ENCODE measurements at regions of chr18 and their contacts with region 1.

Region 1: DNA sequence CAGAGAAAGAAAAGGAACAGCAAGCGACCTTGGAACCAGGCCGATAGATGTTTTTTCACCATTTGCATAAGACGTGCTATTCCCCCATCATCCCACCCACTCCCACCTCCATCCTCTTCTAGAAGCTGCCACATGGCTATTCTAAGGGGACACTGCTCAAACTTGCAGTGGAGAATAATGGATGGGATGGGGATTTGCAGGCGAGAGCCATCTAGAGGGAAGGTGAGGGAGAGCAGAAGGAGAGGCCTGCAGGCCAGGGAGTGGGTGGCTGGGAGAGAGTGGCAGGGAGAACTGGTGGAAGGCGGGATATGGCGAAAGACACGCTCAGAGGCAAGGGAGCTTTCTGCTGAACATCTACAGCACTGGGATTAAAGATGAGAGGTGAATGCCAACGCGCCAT is 84.9 kb downstream of the MAPK4 start:
- DNase-seq: peak in 1 of 2 experiments; percentile 28
- H3K4me3 ChIP-seq: no peak overlapping the region
- H3K4me3 Mint-ChIP-seq: no peak overlapping the region
- H3K27ac Mint-ChIP-seq: no peak overlapping the region
- H3K4me1 ChIP-seq: no peaks in the 10 kb centered on the region
- H3K4me1 Mint-ChIP-seq: no peaks in the 10 kb centered on the region
- H3K27me3 ChIP-seq: no peaks in the 10 kb centered on the region
- H3K27me3 Mint-ChIP-seq: no peaks in the 10 kb centered on the region
- CTCF ChIP-seq: peak in 1 of 2 experiments; percentile 49

Region 2: GRCh38 chr18:50454387-50454988 is 190.3 kb before region 1 on chr18:
- CTCF ChIA-PET with region 1: no interaction called
- POLR2A ChIA-PET with region 1: no interaction called
- intact Hi-C with region 1: no loop called
- DNase-seq: no peak
- H3K4me3 ChIP-seq: no peak overlapping the region
- H3K4me3 Mint-ChIP-seq: no peak overlapping the region
- H3K27ac Mint-ChIP-seq: no peak overlapping the region
- H3K4me1 ChIP-seq: no peaks in the 10 kb centered on the region
- H3K4me1 Mint-ChIP-seq: no peaks in the 10 kb centered on the region
- H3K27me3 ChIP-seq: no peaks in the 10 kb centered on the region
- H3K27me3 Mint-ChIP-seq: no peaks in the 10 kb centered on the region
- CTCF ChIP-seq: no peak

Region 3: GRCh38 chr18:50507120-50507590 is 137.7 kb before region 1 on chr18:
- CTCF ChIA-PET with region 1: no interaction called
- POLR2A ChIA-PET with region 1: no interaction called
- intact Hi-C with region 1: loop called (anchors 1 kb)
- DNase-seq: peak; percentile 37 to 59
- H3K4me3 ChIP-seq: no peak overlapping the region
- H3K4me3 Mint-ChIP-seq: no peak overlapping the region
- H3K27ac Mint-ChIP-seq: no peak overlapping the region
- H3K4me1 ChIP-seq: no peaks in the 10 kb centered on the region
- H3K4me1 Mint-ChIP-seq: no peaks in the 10 kb centered on the region
- H3K27me3 ChIP-seq: no peaks in the 10 kb centered on the region
- H3K27me3 Mint-ChIP-seq: peaks cover under 1% of the 10 kb centered on the region
- CTCF ChIP-seq: peak; percentile 47 to 71

Region 4: DNA sequence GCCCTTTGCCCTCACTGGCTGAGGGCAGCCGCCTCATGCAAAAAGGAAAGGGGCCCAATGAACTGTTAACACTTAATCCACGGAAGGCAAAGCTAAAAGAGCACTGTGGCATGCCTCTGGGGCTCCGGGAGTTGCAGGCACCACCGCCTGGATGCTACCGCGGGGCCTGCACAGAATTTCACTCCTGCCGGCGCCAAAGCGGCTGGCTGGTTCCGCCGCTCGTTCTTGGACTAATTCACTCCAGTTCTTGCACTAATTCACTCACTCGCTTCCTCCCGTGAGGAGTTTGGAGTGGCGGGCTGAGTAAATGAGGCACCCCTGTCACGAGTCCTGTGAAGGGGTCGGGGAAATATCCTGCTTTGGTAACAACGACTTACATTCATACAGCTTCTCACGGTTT is 98.9 kb before region 1 on chr18:
- CTCF ChIA-PET with region 1: no interaction called
- POLR2A ChIA-PET with region 1: no interaction called
- intact Hi-C with region 1: no loop called
- DNase-seq: no peak
- H3K4me3 ChIP-seq: no peak overlapping the region
- H3K4me3 Mint-ChIP-seq: no peak overlapping the region
- H3K27ac Mint-ChIP-seq: no peak overlapping the region
- H3K4me1 ChIP-seq: no peaks in the 10 kb centered on the region
- H3K4me1 Mint-ChIP-seq: no peaks in the 10 kb centered on the region
- H3K27me3 ChIP-seq: no peaks in the 10 kb centered on the region
- H3K27me3 Mint-ChIP-seq: no peaks in the 10 kb centered on the region
- CTCF ChIP-seq: no peak

Region 5: DNA sequence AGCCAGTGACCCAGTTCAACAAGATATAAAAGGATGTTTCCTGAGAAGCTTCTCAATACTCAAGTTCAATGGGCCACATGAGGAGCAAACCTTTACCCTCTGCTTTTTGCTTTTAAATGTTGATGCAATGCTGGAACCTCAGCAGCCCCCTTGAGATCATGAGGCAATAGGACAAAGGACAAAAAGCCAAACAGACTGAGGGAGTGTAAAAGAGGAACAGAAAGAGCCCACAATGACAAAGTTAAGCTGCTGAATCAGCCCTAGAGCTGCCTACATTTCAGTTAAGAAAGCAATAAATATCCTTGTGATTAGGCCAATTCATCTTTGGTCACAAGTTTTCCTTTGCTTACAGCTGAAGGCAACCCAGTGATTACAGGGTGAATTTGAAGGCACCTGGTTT is 98.1 kb after region 1 on chr18:
- CTCF ChIA-PET with region 1: no interaction called
- POLR2A ChIA-PET with region 1: no interaction called
- intact Hi-C with region 1: no loop called
- DNase-seq: no peak
- H3K4me3 ChIP-seq: no peak overlapping the region
- H3K4me3 Mint-ChIP-seq: no peak overlapping the region
- H3K27ac Mint-ChIP-seq: no peak overlapping the region
- H3K4me1 ChIP-seq: peaks cover under 1% of the 10 kb centered on the region; the same call in 1 of the 2 replicates
- H3K4me1 Mint-ChIP-seq: no peaks in the 10 kb centered on the region
- H3K27me3 ChIP-seq: no peaks in the 10 kb centered on the region
- H3K27me3 Mint-ChIP-seq: no peaks in the 10 kb centered on the region
- CTCF ChIP-seq: no peak

Measured in Caco-2 (cell line).